Mammary epithelial cell (primary cell): ENCODE measurements at regions of chr11 and their contacts with region 1.

Region 1: GRCh38 chr11:68354148-68354872 is 41.9 kb downstream of the LRP5 start:
- DNase-seq: peak; percentile 90
- H3K4me3 ChIP-seq: peak overlapping the region in 1 of 3 experiments; percentile 10
- H3K27ac ChIP-seq: peak overlapping the region; percentile 48
- H3K4me1 ChIP-seq: peaks cover 30% of the 10 kb centered on the region
- H3K27me3 ChIP-seq: no peaks in the 10 kb centered on the region
- CTCF ChIP-seq: no peak

Region 2: GRCh38 chr11:68312117-68312779 is 42.1 kb before region 1 on chr11 and contains the start of gene LRP5:
- CTCF ChIA-PET with region 1: no interaction called
- dilution Hi-C with region 1: no loop called
- in situ Hi-C with region 1: no loop called
- intact Hi-C with region 1: loop called (anchors 1 kb)
- DNase-seq: no peak
- H3K4me3 ChIP-seq: peak within 1 kb of the TSS; percentile 62 to 67 (median 64)
- H3K27ac ChIP-seq: peak within 1 kb of the TSS; percentile 69
- H3K4me1 ChIP-seq: peaks cover 35% of the 10 kb centered on the region
- H3K27me3 ChIP-seq: no peaks in the 10 kb centered on the region
- CTCF ChIP-seq: no peak
- total RNA-seq, gene LRP5: 32.6 to 41.7 TPM

Region 3: DNA sequence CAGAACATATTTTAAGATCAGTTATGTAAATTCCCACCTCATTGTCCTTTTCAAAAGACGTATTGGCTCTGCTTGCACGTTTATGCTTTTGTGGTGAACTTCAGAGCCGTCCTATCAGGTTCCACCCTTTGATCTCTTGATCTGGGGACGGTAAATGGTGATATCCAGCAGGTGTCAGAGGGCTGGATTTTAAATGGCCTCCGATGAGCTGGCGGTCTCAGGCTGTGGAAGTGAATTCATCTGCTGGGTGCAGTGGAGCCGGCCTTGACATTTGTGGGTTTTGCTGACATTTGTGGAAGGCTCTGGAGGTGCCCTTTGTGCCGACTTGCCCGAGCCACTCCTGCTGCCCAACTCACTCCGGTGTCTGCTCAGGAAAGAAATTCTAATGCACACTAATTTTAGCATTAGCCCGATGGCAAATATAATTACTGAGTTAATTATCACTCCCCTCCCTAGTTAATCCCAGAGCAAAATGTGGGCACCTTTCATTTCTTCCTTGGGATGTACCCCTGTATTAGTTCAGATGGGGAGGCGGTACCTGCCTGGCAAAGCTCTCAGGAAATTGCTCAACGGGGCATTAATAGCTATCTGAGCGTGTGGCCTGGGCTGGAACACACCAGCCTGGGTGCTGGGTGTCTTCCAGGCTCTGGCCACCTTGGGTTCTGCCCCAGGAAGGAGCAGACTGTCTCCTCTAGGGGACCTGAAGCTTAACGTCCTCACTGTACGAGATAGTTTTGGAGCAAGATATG is 32.8 kb before region 1 on chr11:
- CTCF ChIA-PET with region 1: no interaction called
- dilution Hi-C with region 1: no loop called
- in situ Hi-C with region 1: no loop called
- intact Hi-C with region 1: loop called (anchors 2 kb)
- DNase-seq: peak; percentile 55
- H3K4me3 ChIP-seq: no peak overlapping the region
- H3K27ac ChIP-seq: peak overlapping the region; percentile 19
- H3K4me1 ChIP-seq: peaks cover 30% of the 10 kb centered on the region
- H3K27me3 ChIP-seq: no peaks in the 10 kb centered on the region
- CTCF ChIP-seq: no peak